HCT116 (cell line): ENCODE measurements at regions of chr12 and their contacts with region 1.

Region 1: DNA sequence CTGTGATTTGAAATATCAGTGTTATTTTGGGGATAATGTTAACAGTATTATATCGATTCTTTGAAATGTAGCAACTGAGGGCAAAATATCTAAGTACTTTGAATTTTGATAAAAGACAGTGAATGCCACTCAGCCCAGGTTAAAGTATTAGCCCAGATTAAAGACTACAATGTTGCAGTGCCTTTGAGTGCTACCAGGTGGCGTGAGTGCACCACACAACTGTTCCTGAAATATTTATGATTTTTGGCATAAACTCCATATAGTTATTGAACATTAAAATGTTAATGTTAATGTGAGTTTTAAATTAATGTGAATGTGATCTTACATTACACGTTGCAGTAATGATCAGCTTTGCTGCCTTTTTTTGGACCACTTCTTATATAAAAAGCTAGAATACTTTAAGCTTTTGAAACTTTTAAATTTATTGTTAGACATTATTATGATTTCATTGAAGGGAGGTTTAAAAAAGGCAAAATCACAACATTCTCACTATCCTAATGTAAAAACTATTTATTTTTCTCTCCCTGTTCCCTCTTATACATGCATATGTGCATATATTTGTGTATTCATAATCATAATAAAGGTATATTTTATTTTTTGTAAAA is 22.5 kb downstream of the MRPS35 start:
- DNase-seq: no peak
- ATAC-seq: peak; percentile 77
- H3K4me3 ChIP-seq: no peak overlapping the region
- H3K27ac ChIP-seq: no peak overlapping the region
- H3K4me1 ChIP-seq: no peaks in the 10 kb centered on the region
- H3K27me3 ChIP-seq: no peaks in the 10 kb centered on the region
- CTCF ChIP-seq: peak; percentile 81 to 92 (median 81)
- POLR2A ChIP-seq: no peak
- RAD21 ChIP-seq: peak; percentile 88

Region 2: DNA sequence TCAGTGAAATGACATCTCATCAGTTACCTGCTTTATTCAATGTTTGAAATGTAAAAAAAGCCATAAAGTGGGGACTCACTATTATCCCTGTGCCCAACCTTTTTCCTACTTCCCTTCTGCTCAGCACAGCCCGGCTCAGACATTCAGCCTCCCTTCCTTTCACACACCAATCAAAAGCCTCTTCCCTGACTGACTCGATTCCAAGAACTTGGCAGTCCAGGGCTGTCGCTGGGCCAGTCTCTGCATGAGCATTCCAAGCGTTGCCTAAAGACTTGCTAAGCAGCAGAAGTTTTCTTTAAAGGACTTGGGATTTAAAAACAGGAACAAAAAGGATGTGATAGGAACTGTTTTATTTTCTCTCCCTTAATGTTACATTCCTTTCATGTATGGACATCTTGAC is 922.8 kb before region 1 on chr12:
- CTCF ChIA-PET with region 1: no interaction called
- POLR2A ChIA-PET with region 1: no interaction called
- RAD21 ChIA-PET with region 1: no interaction called
- intact Hi-C with region 1: no loop called
- DNase-seq: no peak
- ATAC-seq: no peak
- H3K4me3 ChIP-seq: no peak overlapping the region
- H3K27ac ChIP-seq: no peak overlapping the region
- H3K4me1 ChIP-seq: no peaks in the 10 kb centered on the region
- H3K27me3 ChIP-seq: no peaks in the 10 kb centered on the region
- CTCF ChIP-seq: no peak
- POLR2A ChIP-seq: no peak
- RAD21 ChIP-seq: no peak

Region 3: DNA sequence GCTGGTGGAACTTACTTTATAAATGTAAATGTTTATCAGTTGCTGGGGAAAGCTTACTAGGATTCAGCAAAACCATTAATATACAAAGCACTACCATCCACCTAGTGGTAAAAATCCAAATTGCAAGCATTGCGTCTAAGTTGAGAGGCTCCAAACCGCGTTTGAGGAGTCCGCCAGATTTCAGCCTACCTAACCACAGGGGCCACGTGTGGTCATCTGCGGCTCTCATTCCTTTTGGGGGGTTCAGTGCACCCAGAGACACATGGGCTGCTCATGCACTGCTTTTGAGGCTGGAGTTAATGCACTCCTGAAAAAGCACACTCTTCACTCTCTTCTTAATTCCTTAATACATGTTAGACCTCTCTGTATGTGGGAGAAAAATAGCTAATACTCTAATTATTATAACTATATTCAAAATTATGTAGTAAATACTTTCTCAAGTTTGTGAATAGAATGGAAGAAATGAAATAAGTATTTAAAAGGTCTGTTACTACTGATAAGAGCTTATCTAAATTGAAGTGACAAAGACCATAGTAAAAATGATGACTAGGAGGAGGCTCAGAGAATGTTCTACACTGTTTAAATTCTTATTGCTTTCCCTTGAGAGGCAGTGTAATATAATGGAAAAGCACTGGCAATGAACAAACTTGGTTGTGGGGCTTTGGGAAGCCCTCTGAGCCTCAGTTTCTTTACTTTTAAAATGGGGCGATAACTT is 88.3 kb after region 1 on chr12:
- CTCF ChIA-PET with region 1: interaction called, 25 read pairs
- POLR2A ChIA-PET with region 1: no interaction called
- RAD21 ChIA-PET with region 1: interaction called, 4 read pairs
- intact Hi-C with region 1: loop called (anchors 1 kb)
- DNase-seq: peak; percentile 77
- ATAC-seq: peak; percentile 90
- H3K4me3 ChIP-seq: no peak overlapping the region
- H3K27ac ChIP-seq: no peak overlapping the region
- H3K4me1 ChIP-seq: peaks cover 0 to 16% of the 10 kb centered on the region in 2 experiments; a peak in 2 of 4 replicates
- H3K27me3 ChIP-seq: no peaks in the 10 kb centered on the region
- CTCF ChIP-seq: peak; percentile 56 to 82 (median 70); a peak in 4 of 6 replicates
- POLR2A ChIP-seq: peak; percentile 12
- RAD21 ChIP-seq: peak; percentile 69

Region 4: GRCh38 chr12:27840244-27840999 is 107.3 kb after region 1 on chr12:
- CTCF ChIA-PET with region 1: interaction called, 20 read pairs
- POLR2A ChIA-PET with region 1: no interaction called
- RAD21 ChIA-PET with region 1: no interaction called
- intact Hi-C with region 1: loop called (anchors 1 kb)
- DNase-seq: no peak
- ATAC-seq: no peak
- H3K4me3 ChIP-seq: no peak overlapping the region
- H3K27ac ChIP-seq: no peak overlapping the region
- H3K4me1 ChIP-seq: peaks cover 18% of the 10 kb centered on the region in 2 experiments
- H3K27me3 ChIP-seq: no peaks in the 10 kb centered on the region
- CTCF ChIP-seq: peak; percentile 31 to 66 (median 32); a peak in 5 of 6 replicates
- POLR2A ChIP-seq: no peak
- RAD21 ChIP-seq: peak; percentile 45

Region 5: GRCh38 chr12:27940756-27941402 is 207.7 kb after region 1 on chr12:
- CTCF ChIA-PET with region 1: interaction called, 20 read pairs
- POLR2A ChIA-PET with region 1: no interaction called
- RAD21 ChIA-PET with region 1: interaction called in 1 of 2 experiments, 4 read pairs
- intact Hi-C with region 1: loop called (anchors 1 kb)
- DNase-seq: peak; percentile 77
- ATAC-seq: peak; percentile 97
- H3K4me3 ChIP-seq: no peak overlapping the region
- H3K27ac ChIP-seq: no peak overlapping the region
- H3K4me1 ChIP-seq: peaks cover 0 to 4% of the 10 kb centered on the region in 2 experiments; a peak in 1 of 4 replicates
- H3K27me3 ChIP-seq: no peaks in the 10 kb centered on the region
- CTCF ChIP-seq: peak; percentile 69 to 94 (median 85); a peak in 5 of 6 replicates
- POLR2A ChIP-seq: no peak
- RAD21 ChIP-seq: peak; percentile 78

Region 6: DNA sequence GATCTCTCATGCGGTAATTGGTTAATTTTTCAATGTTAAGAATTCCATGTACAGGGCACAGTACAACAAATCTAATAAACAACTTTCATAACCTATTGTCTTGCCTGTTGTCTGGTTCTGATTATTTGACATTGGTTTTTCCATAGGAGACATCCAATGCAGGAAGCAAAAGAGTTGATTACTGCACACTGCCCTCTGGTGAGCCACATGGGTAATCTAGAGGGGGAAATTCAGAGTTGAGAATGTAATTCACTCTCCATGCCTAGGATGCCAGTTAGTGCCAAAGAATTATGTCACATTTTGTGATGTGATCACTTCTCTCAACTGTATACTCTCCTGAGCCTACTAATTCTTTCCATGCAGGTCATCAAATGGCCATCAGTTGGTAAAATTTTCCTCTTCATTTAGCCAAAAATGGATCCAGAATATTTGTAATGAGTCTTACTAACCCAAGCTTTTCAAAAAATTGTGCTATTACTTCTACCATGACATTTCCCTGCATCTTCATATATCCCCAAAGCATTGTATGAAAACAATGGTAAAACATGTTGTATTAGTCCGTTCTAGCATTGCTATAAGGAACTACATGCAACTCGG is 439.4 kb after region 1 on chr12:
- CTCF ChIA-PET with region 1: interaction called, 9 read pairs
- POLR2A ChIA-PET with region 1: no interaction called
- RAD21 ChIA-PET with region 1: no interaction called
- intact Hi-C with region 1: loop called (anchors 1 kb)
- DNase-seq: peak; percentile 36
- ATAC-seq: peak; percentile 93
- H3K4me3 ChIP-seq: no peak overlapping the region
- H3K27ac ChIP-seq: no peak overlapping the region
- H3K4me1 ChIP-seq: no peaks in the 10 kb centered on the region
- H3K27me3 ChIP-seq: no peaks in the 10 kb centered on the region
- CTCF ChIP-seq: peak; percentile 53 to 73 (median 72); a peak in 5 of 6 replicates
- POLR2A ChIP-seq: no peak
- RAD21 ChIP-seq: peak; percentile 72

Region 7: DNA sequence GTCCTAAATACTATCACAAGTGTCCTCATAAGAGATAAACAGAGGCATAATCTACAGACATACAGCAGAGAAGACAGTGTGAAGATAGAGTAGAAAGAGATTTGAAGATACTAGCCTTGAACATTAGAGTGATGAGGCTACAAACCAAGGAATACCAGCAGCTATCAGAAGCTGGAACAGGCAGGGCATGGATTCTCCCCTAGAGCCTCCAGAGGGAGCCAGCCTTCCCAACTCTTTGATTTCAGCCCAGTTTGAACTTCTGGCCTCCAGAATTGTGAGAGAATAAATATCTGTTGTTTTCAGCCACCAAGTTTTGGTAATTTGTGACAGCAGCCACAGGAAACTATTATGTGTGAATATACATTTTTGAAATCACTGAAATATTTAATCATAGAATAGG is 504.3 kb after region 1 on chr12:
- CTCF ChIA-PET with region 1: no interaction called
- POLR2A ChIA-PET with region 1: no interaction called
- RAD21 ChIA-PET with region 1: no interaction called
- intact Hi-C with region 1: no loop called
- DNase-seq: no peak
- ATAC-seq: peak; percentile 70
- H3K4me3 ChIP-seq: no peak overlapping the region
- H3K27ac ChIP-seq: no peak overlapping the region
- H3K4me1 ChIP-seq: no peaks in the 10 kb centered on the region
- H3K27me3 ChIP-seq: no peaks in the 10 kb centered on the region
- CTCF ChIP-seq: peak in 2 of 3 experiments; percentile 46 to 48; a peak in 4 of 6 replicates
- POLR2A ChIP-seq: no peak
- RAD21 ChIP-seq: peak; percentile 23; the same call in 1 of the 2 replicates

Region 8: GRCh38 chr12:28872654-28873268 is 1139.6 kb after region 1 on chr12:
- CTCF ChIA-PET with region 1: interaction called, 11 read pairs
- POLR2A ChIA-PET with region 1: no interaction called
- RAD21 ChIA-PET with region 1: no interaction called
- intact Hi-C with region 1: loop called (anchors 2 kb)
- DNase-seq: peak; percentile 46
- ATAC-seq: peak; percentile 87
- H3K4me3 ChIP-seq: no peak overlapping the region
- H3K27ac ChIP-seq: no peak overlapping the region
- H3K4me1 ChIP-seq: peaks cover 0 to 5% of the 10 kb centered on the region in 2 experiments; a peak in 1 of 4 replicates
- H3K27me3 ChIP-seq: no peaks in the 10 kb centered on the region
- CTCF ChIP-seq: peak; percentile 50 to 87 (median 84); a peak in 5 of 6 replicates
- POLR2A ChIP-seq: no peak
- RAD21 ChIP-seq: peak; percentile 78

Region 9: DNA sequence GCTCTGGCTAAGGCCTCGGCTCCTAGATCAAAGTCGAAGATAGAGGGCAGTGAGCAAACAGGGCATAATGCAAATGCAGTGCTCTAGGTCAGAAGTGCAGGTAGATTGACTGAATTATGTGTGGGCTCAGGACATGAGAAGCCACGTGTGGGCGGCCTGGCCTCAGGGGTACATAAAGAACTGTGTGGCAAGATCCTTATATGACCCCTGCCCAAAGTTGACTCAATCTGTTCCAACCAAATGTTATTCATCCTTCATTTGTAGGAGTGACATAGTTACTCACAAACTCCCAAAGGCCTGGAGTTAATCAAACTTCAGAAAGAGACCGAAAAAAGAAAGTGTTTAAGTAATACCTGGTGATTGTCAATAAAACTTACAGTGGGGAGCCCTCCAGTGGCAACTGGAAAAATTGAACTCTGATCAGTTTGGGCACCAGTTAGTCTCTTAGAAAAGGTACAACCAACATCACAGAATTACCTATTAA is 1265.5 kb after region 1 on chr12:
- CTCF ChIA-PET with region 1: interaction called, 3 read pairs
- POLR2A ChIA-PET with region 1: no interaction called
- RAD21 ChIA-PET with region 1: no interaction called
- intact Hi-C with region 1: loop called (anchors 1 kb)
- DNase-seq: no peak
- ATAC-seq: peak; percentile 69
- H3K4me3 ChIP-seq: no peak overlapping the region
- H3K27ac ChIP-seq: no peak overlapping the region
- H3K4me1 ChIP-seq: no peaks in the 10 kb centered on the region
- H3K27me3 ChIP-seq: no peaks in the 10 kb centered on the region
- CTCF ChIP-seq: peak; percentile 38 to 70 (median 41); a peak in 5 of 6 replicates
- POLR2A ChIP-seq: no peak
- RAD21 ChIP-seq: peak; percentile 59